Left cardiac atrium (tissue), 4 donors: ENCODE measurements at regions of chr1 and their contacts with region 1.

Region 1: GRCh38 chr1:28804071-28804470 is 7.9 kb upstream of the OPRD1 start:
- DNase-seq: no peak
- ATAC-seq: no peak

Region 2: DNA sequence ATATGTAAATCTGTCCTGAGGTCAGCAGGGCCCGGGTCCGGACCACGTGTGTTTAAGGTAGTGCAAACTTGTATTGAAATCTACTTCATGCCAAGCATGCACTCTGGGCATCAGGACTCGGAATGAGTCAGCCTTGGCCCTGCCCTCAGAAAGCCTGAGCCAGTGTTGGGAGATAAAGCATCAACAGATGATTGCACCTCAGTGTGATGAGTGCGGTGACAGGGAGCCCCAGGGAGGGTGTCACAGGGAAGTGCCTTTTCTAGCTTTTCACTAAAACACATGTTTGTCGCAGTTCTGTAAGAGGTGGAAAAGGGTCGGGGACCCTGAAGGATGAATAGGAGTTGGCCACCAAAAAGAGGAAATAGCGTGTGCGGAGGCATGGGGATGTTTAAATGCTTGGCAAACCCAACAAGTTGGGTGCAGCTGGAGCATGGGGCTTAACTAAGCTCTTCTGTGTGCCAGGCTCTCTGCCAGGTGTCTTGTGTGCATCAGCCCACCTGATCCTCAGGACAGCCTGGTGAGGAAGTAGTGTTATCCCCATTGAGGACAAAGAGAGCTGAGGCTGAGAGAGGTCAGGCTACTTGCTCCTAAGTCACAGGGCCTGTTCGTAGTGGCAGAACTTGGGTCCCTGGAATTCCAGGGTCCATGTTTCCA is 62.1 kb after region 1 on chr1:
- intact Hi-C with region 1: loop called in 1 of 2 experiments (anchors 5 kb)
- DNase-seq: no peak
- ATAC-seq: peak in 1 of 2 donors; percentile 84

Region 3: DNA sequence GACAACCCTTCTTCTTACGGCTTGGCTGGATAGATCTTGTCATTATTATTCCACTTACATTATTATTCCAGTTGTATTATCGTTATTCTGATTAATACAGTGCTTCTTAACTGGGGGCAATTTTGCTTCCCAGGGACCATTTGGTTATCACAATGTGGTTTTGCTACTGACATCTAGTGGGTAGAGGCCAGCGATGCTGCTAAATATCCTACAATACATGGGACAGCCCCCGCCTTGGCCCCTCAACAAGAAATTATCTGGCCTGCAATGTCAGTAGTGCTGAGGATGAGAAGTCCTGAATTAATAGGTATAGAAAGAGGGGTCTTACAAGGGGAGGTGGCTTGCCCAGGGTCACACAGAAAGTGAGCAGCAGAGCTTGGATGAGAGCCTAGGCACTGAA is 537.9 kb after region 1 on chr1:
- intact Hi-C with region 1: no loop called
- DNase-seq: no peak
- ATAC-seq: no peak